ENCODE measurements at regions of chr2 and their contacts with region 1.

Region 1: DNA sequence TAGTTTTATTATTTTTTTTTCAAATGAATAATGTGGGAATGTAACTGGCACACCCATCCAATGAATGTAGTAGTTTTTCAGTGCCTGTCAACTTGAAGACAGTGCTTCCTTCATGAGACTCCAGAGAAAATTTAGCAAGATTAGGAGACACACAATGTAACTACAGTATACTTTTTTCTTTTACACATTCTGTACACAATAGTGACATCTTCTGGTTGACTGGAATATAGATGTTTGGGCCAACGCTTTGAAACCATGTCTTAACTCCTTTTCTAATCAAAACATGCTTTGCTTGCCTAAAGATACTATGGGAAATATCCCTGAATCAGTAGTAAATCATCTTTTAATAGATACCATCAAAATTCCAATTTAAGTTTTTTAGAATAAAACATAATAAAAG is 229.5 kb upstream of the ZC3H15 start:
- DNase-seq: peak; percentile 64
- H3K4me3 ChIP-seq: no peak overlapping the region
- H3K27ac ChIP-seq: no peak overlapping the region
- H3K4me1 ChIP-seq: no peaks in the 10 kb centered on the region
- H3K27me3 ChIP-seq: no peaks in the 10 kb centered on the region
- CTCF ChIP-seq: peak; percentile 35 to 36
- POLR2A ChIP-seq: no peak

Region 2: GRCh38 chr2:185291035-185291647 is 965.4 kb before region 1 on chr2:
- CTCF ChIA-PET with region 1: interaction called, 13 read pairs
- POLR2A ChIA-PET with region 1: no interaction called
- dilution Hi-C with region 1: no loop called
- intact Hi-C with region 1: loop called (anchors 1 kb)
- DNase-seq: peak; percentile 47
- H3K4me3 ChIP-seq: no peak overlapping the region
- H3K27ac ChIP-seq: no peak overlapping the region
- H3K4me1 ChIP-seq: no peaks in the 10 kb centered on the region
- H3K27me3 ChIP-seq: no peaks in the 10 kb centered on the region
- CTCF ChIP-seq: peak; percentile 47 to 75
- POLR2A ChIP-seq: no peak

Region 3: GRCh38 chr2:185625604-185626003 is 630.9 kb before region 1 on chr2:
- CTCF ChIA-PET with region 1: interaction called, 4 read pairs
- POLR2A ChIA-PET with region 1: no interaction called
- dilution Hi-C with region 1: no loop called
- intact Hi-C with region 1: loop called (anchors 2 kb)
- DNase-seq: no peak
- H3K4me3 ChIP-seq: no peak overlapping the region
- H3K27ac ChIP-seq: no peak overlapping the region
- H3K4me1 ChIP-seq: no peaks in the 10 kb centered on the region
- H3K27me3 ChIP-seq: no peaks in the 10 kb centered on the region
- CTCF ChIP-seq: no peak
- POLR2A ChIP-seq: no peak

Region 4: DNA sequence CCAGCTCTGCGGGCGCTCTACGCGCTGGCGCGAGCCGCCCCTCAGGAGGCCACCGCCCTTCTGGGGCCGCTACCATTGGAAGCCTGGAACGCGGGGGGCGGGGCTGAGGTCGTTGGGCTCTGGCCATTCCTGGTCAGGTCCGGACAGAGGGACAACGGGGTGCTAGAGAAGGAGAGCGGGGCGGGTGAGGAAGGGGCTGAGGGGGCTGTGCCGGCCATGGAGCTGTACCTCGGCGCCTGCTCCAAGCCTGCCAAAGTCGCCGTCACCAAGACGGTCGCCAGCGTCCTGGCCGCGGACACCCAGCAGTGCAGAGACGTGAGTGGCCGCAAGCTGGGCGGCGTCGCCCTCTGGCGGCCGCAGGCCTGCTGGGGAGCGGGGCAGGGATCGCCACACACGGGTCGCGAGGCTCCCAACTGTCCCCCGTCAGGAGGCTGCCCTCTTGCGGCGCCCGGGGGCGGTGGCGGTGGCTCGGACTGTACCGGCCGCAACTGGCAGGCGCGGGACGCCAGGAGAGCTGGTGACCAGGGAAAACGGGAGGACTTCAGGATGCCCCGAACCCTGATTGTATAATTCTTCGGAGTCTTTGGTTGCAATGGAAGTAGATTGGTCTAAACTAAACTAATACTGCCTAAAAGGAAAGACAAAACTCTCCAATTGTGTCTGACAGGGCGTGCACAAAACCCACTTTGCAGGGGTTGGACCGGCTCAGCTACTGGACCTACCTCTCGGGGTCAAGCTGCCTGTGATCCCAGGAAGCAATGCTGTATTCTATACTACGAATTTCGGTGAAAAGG is 517.7 kb before region 1 on chr2 and contains the start of gene FSIP2:
- CTCF ChIA-PET with region 1: interaction called, 16 read pairs
- POLR2A ChIA-PET with region 1: no interaction called
- dilution Hi-C with region 1: no loop called
- intact Hi-C with region 1: loop called (anchors 1 kb)
- DNase-seq: peak; percentile 84
- H3K4me3 ChIP-seq: peak within 1 kb of the TSS; percentile 28 to 50 (median 42)
- H3K27ac ChIP-seq: no peak within 1 kb of the TSS
- H3K4me1 ChIP-seq: peaks cover 2% of the 10 kb centered on the region
- H3K27me3 ChIP-seq: peaks cover 0 to 2% of the 10 kb centered on the region in 2 experiments
- CTCF ChIP-seq: peak; percentile 99 to 100
- POLR2A ChIP-seq: no peak
- total RNA-seq, gene FSIP2: 0.16 and 0.24 TPM in 2 replicates

Region 5: DNA sequence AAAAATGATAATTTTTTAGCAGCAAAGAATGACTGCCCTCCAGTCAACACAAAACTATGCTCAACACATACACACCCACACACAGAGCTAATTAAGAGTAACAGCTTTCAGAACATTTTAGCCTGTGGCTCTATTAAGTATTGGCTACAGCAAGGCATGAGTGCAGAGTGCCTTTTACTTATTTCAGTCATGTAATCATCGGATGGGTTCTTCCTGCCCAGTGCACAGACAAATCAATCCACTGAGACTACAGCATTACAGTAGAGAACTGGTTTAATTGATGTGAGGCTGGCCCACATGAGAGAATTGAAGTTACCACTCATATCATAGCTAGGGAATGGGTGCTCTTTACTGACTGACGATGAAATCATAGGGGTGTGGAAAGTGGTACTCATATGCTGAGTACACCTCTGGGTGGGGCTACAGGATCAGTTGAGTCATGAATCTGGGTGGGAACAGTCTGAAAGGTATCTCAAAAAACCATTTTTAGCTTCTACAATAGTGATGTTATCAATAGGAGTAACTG is 276.9 kb before region 1 on chr2:
- CTCF ChIA-PET with region 1: no interaction called
- POLR2A ChIA-PET with region 1: no interaction called
- dilution Hi-C with region 1: no loop called
- intact Hi-C with region 1: loop called (anchors 5 kb)
- DNase-seq: no peak
- H3K4me3 ChIP-seq: no peak overlapping the region
- H3K27ac ChIP-seq: no peak overlapping the region
- H3K4me1 ChIP-seq: no peaks in the 10 kb centered on the region
- H3K27me3 ChIP-seq: no peaks in the 10 kb centered on the region
- CTCF ChIP-seq: no peak
- POLR2A ChIP-seq: no peak

Region 6: GRCh38 chr2:186460465-186460864 is 203.9 kb after region 1 on chr2:
- CTCF ChIA-PET with region 1: interaction called, 5 read pairs
- POLR2A ChIA-PET with region 1: no interaction called
- dilution Hi-C with region 1: no loop called
- intact Hi-C with region 1: loop called (anchors 5 kb)
- DNase-seq: peak; percentile 39
- H3K4me3 ChIP-seq: no peak overlapping the region
- H3K27ac ChIP-seq: no peak overlapping the region
- H3K4me1 ChIP-seq: no peaks in the 10 kb centered on the region
- H3K27me3 ChIP-seq: no peaks in the 10 kb centered on the region
- CTCF ChIP-seq: peak; percentile 8 to 39
- POLR2A ChIP-seq: no peak

Region 7: GRCh38 chr2:187075199-187075635 is 818.7 kb after region 1 on chr2:
- CTCF ChIA-PET with region 1: no interaction called
- POLR2A ChIA-PET with region 1: no interaction called
- dilution Hi-C with region 1: no loop called
- intact Hi-C with region 1: no loop called
- DNase-seq: no peak
- H3K4me3 ChIP-seq: no peak overlapping the region
- H3K27ac ChIP-seq: no peak overlapping the region
- H3K4me1 ChIP-seq: no peaks in the 10 kb centered on the region
- H3K27me3 ChIP-seq: no peaks in the 10 kb centered on the region
- CTCF ChIP-seq: no peak
- POLR2A ChIP-seq: no peak